Left colon (tissue), 2 donors: ENCODE measurements at regions of chr6 and their contacts with region 1.

Region 1: DNA sequence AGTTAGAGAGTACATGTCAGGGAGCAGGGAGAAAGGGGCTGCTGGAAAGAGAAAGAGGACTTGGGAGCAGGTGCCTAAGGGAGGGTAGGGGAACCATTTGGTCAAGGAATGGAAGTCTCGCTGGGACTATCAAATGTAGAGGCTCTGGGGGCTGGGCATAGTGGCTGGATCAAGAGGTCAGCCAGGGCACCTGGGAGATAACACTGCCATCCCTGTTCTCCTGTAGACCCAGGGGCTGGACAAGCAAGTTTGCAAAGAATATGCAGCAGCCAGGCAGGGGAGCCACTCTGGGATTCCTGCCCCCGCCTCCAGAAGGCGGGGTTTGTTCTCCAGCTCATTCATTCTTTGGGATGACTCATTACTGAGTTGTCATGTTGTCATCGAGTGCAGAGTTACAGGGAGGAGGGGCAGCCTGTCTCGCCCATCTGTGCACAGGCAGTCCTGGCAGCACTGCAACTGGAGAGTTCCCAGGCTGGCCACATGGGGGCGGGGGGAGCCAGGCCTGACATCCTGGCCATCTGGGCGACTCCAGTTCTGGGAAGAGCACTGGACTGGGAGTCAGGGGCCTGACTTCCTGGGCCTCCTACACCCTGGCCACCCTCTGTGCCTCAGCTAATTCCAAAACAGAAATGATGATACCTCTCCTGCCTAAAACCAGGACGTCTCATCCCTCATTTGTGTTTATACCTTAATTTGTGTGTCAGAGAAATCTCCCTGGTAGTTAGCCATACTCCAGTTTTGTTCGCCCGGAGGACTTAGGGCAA is 28.2 kb upstream of the ZFAND3 start:
- DNase-seq: peak; percentile 88 to 92
- ATAC-seq: peak; percentile 99

Region 2: GRCh38 chr6:37516076-37516919 is 275.0 kb before region 1 on chr6:
- intact Hi-C with region 1: no loop called
- DNase-seq: peak; percentile 52 to 61
- ATAC-seq: peak; percentile 86

Region 3: DNA sequence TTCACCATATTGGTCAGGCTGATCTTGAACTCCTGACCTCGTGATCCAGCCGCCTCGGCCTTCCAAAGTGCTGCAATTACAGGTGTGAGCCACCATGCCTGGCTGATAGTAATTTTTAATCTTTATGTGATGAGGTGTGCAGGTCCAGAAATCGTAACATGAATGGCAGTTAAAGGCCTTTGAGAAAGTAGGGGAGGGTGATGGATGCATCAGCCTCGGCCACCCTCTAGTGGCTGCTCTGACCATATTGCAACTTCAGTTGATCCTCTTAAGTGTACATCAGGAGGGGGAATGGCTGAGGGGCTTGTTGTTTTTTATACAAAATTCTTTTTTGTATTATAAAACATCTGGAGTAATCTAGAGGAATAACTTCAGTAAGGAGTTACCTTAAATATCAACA is 221.2 kb after region 1 on chr6:
- intact Hi-C with region 1: loop called in 1 of 2 experiments (anchors 5 kb)
- DNase-seq: peak in 1 of 2 donors; percentile 8
- ATAC-seq: peak; percentile 77